MCF 10A (cell line): ENCODE measurements at regions of chr11 and their contacts with region 1.

Region 1: DNA sequence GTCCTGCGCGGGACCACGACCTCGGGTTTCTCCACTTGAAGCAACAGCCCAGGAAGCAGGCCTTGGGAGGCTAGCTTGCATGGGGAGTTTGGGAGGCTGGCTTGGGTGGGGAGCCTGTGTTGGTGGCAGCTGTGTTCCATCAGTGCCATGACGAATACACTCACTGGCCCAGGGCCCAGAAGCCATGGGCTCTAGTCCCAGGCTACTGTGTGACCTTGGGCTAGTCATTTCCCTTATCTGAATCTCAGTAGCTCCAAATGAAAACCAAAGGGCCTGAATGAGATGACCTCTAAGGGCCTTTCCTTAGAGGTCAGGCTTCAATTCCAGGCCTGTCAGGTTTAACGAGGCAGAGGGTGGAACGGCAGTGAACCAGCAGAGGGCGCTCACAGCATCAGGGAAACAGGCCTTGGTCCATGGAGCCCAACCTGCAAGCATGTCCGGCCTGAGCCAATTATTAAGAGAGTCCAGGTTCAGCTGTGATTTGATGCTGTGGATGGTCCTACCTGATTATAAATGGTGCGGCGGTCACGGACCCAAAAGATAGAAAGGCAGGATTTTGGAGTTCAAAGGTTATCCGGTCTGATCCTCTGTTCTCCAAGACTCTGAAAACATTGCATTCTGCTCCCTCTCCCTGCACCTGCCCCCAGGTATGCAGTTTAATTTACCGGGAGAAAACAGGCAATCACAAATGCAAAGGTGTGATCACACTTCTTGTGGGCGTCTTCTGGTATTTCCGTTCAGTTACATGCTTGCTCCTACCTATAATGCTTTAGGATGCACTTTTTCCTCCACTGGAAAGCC is 15.9 kb downstream of the PTPN5 start:
- DNase-seq: peak; percentile 78
- H3K4me3 Mint-ChIP-seq: no peak overlapping the region
- H3K27ac Mint-ChIP-seq: no peak overlapping the region
- H3K4me1 Mint-ChIP-seq: peaks cover 5% of the 10 kb centered on the region
- H3K27me3 Mint-ChIP-seq: peaks cover 26% of the 10 kb centered on the region
- CTCF ChIP-seq: peak; percentile 83

Region 2: DNA sequence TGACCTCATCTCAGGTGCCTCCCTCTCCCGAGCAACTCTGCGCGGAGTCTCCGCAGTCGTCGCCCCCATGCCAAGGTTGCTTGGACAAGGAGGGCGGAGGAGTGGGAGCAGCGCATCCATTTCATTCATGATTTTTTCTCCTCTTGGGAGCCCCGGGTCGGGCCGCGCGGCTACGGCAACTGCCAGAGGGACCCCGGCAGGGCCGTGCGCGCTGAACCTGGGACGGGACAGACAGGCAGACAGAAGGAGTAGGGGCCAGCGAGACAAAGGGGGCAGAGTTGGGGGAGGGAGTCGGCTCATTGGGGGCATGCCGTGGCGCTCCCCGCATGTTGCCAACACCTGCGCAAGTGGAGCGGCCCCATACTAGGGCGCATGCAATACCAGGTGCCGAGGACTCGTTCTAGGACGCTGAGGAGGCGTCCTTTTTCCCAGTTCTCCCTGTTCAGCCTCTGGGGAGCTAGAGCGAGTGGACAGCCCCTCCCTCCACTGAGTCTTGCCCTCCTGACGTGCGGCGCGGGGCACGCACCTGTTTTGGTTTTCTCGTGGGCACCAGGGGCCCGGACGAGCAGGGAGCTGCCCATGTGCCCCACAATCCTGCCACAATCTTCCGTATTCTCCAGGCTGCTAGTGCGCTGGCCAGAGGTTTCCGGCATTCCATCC is 16.4 kb after region 1 on chr11:
- CTCF ChIA-PET with region 1: interaction called, 15 read pairs
- POLR2A ChIA-PET with region 1: no interaction called
- intact Hi-C with region 1: no loop called
- DNase-seq: no peak
- H3K4me3 Mint-ChIP-seq: no peak overlapping the region
- H3K27ac Mint-ChIP-seq: no peak overlapping the region
- H3K4me1 Mint-ChIP-seq: no peaks in the 10 kb centered on the region
- H3K27me3 Mint-ChIP-seq: peaks cover 76% of the 10 kb centered on the region
- CTCF ChIP-seq: no peak

Region 3: DNA sequence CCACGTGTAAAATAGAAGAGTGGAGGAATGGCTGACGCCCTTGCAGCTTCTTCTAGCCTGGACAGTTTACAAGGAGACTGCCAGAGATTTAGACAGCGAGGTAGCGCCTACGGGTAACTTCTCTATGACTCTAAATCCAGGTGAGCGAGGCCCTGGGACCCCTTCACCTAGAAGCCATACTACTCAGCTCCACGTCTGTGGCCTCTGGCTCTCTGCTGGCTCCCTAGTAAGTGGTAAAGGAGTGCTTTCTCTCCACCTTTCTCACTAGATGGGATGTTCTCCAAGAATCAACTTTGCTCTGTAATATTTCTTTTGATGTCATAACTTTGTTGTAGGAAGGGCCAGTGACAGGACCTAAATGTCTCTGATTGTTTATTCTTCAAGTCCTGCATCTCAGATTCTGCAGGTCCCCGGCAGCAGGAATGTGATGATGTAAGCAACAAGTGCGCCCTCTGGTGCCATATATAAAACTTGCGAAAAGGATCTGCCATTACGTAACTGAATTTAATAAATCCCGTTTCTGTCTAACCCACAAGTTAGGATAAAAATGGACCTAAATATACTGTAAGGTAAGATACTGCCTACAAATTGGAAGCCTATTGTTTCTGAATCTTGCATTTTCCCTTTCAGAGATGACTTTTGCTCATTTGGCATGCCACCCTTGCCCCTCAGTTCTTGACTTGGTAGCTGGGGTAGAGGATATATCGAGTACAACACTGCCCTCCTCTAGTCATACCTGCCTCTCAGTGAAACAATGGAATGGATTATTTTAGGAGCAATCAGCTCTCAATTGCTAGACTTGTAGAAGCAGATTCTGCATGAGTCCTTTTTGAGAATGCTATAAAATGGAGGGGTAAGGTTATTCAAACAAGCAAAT is 26.9 kb after region 1 on chr11:
- CTCF ChIA-PET with region 1: interaction called, 20 read pairs
- POLR2A ChIA-PET with region 1: no interaction called
- intact Hi-C with region 1: loop called (anchors 1 kb)
- DNase-seq: peak; percentile 66
- H3K4me3 Mint-ChIP-seq: no peak overlapping the region
- H3K27ac Mint-ChIP-seq: no peak overlapping the region
- H3K4me1 Mint-ChIP-seq: no peaks in the 10 kb centered on the region
- H3K27me3 Mint-ChIP-seq: peaks cover 84% of the 10 kb centered on the region
- CTCF ChIP-seq: peak; percentile 50

Region 4: GRCh38 chr11:18853086-18853720 is 77.5 kb after region 1 on chr11:
- CTCF ChIA-PET with region 1: interaction called, 37 read pairs
- POLR2A ChIA-PET with region 1: no interaction called
- intact Hi-C with region 1: loop called (anchors 1 kb)
- DNase-seq: peak; percentile 50
- H3K4me3 Mint-ChIP-seq: no peak overlapping the region
- H3K27ac Mint-ChIP-seq: no peak overlapping the region
- H3K4me1 Mint-ChIP-seq: no peaks in the 10 kb centered on the region
- H3K27me3 Mint-ChIP-seq: peaks cover 82% of the 10 kb centered on the region
- CTCF ChIP-seq: peak; percentile 62

Region 5: DNA sequence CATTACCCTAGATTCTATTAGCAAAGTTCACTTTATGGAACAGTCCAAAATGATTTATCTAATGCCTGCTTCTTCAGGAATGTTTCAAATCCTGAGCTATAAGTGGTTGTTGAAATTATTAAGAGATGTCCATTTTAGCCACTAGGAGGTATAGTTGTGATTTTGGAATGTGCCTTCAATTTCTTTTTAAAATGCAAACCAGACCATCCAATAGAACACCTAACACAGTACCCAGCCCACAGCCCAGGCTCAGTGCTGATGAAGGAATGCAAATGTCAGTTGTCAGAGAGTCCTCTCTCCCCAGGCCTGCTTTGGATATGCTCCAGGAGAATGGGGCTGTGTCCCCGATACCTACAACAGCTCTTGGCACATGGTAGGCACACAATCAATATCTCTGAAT is 550.8 kb after region 1 on chr11:
- CTCF ChIA-PET with region 1: no interaction called
- POLR2A ChIA-PET with region 1: no interaction called
- intact Hi-C with region 1: no loop called
- DNase-seq: peak; percentile 41
- H3K4me3 Mint-ChIP-seq: no peak overlapping the region
- H3K27ac Mint-ChIP-seq: no peak overlapping the region
- H3K4me1 Mint-ChIP-seq: no peaks in the 10 kb centered on the region
- H3K27me3 Mint-ChIP-seq: peaks cover 80% of the 10 kb centered on the region
- CTCF ChIP-seq: peak; percentile 29